ENCODE measurements at regions of chr6 and their contacts with region 1.

Region 1: GRCh38 chr6:108030211-108030610 is 44.3 kb downstream of the OSTM1 start:
- DNase-seq: peak; percentile 40
- ATAC-seq: no peak
- H3K4me3 ChIP-seq: no peak overlapping the region
- H3K27ac ChIP-seq: no peak overlapping the region
- H3K4me1 ChIP-seq: peaks cover 14% of the 10 kb centered on the region
- H3K27me3 ChIP-seq: no peaks in the 10 kb centered on the region
- CTCF ChIP-seq: no peak
- EP300 ChIP-seq: no peak
- POLR2A ChIP-seq: no peak
- RAD21 ChIP-seq: no peak

Region 2: GRCh38 chr6:107982486-107982885 is 47.7 kb before region 1 on chr6:
- CTCF ChIA-PET with region 1: no interaction called
- POLR2A ChIA-PET with region 1: no interaction called
- in situ Hi-C with region 1: no loop called
- intact Hi-C with region 1: loop called (anchors 5 kb)
- DNase-seq: no peak
- ATAC-seq: no peak
- H3K4me3 ChIP-seq: no peak overlapping the region
- H3K27ac ChIP-seq: no peak overlapping the region
- H3K4me1 ChIP-seq: 0 out of 2 replicates have a peak, but pooled peaks cover 1% of the 10 kb centered on the region
- H3K27me3 ChIP-seq: no peaks in the 10 kb centered on the region; a peak in 1 of 5 replicates
- CTCF ChIP-seq: no peak
- EP300 ChIP-seq: no peak
- POLR2A ChIP-seq: no peak
- RAD21 ChIP-seq: no peak

Measured in HepG2 (cell line).